Activated CD8-positive, alpha-beta T cell treated with anti-CD3 and anti-CD28 coated beads, Interleukin-2, amount 10 ng/mL, durations not matched to agents 7 days and 5 days (primary cell): ENCODE measurements at regions of chr12 and their contacts with region 1.

Region 1: DNA sequence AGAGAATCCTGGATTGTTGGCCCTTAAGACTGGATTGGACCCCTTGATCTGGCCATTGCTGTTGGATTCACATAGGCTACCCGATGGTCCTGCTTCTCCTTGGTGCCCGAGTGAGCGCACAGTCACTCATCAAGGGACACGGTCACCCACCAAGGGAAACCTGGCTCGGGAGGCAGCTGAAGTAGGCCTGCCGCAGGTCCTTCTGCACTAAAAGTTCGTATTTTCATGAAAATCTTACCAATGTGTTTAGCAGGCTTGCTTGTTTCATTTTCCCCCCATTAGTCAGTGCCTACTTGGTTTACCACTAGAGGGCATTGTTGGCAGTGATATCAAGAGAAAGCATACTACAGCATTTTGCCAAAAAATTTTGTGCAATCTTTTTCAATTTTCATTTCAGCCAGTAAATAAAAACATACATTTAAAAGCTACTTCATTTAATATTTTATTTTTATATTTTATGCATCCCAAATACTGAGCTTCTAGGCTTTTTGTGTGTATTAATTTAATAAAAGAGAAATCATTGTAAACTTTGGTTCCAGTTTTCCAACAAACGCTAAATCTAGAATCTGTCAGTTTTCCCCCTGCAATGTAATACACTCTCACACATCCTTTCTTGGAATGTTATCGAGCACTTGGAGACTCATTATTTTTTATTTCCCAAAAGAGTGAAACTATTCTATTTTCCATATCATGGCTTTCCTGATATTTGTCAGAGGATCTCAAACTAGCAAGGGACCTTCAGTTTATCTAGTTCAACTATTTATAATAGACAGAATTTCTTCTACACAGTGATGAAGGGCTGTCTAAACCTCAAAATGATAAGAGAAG is 116.7 kb downstream of the LMNTD1 start:
- DNase-seq: peak; percentile 62
- ATAC-seq: peak; percentile 78
- H3K4me3 Mint-ChIP-seq: peak overlapping the region; percentile 51
- H3K27ac Mint-ChIP-seq: peak overlapping the region; percentile 33
- H3K4me1 Mint-ChIP-seq: peaks cover 11% of the 10 kb centered on the region
- H3K27me3 Mint-ChIP-seq: no peaks in the 10 kb centered on the region

Region 2: DNA sequence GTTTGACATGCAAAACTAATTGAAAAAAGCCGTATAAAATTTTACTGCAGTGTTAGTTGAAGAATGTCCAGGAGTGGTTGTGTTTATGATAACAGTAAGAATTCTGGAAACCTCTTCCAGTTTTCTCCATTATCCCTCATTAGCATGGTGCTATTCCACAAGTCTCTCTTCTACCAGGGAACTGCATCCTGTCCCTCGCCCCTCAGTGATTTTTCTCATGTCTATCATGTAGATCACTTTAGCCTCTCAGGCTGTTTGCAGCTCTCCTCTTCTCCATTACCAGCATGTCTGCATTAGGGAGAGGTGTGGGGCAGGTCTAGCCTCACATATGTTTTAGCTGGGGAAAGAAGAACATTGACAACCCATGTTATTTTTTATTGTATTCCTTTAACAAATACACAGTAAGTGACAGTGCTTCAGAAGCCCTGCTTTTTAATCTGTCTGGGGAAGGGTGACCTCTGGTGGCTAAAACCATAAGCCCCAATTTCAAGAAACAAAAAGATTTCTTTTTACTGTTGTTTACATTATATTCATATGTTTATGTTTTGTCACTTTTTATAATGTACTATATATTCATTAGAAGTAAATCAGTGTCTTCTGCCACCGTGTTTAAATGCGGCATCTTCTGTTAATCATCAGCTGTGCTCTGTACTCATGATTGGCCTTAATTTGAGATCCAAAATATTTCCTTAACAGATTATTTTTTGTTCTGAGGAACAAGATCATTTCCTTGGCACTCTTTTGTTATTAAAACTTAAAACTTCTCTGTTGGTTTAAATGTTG is 592.7 kb after region 1 on chr12:
- CTCF ChIA-PET with region 1: interaction called, 13 read pairs
- POLR2A ChIA-PET with region 1: no interaction called
- DNase-seq: peak; percentile 49
- ATAC-seq: no peak
- H3K4me3 Mint-ChIP-seq: no peak overlapping the region
- H3K27ac Mint-ChIP-seq: no peak overlapping the region
- H3K4me1 Mint-ChIP-seq: no peaks in the 10 kb centered on the region
- H3K27me3 Mint-ChIP-seq: peaks cover 16% of the 10 kb centered on the region